ENCODE measurements at regions of chr22 and their contacts with region 1.

Region 1: GRCh38 chr22:42863349-42863961 is 6.4 kb upstream of the ARFGAP3 start:
- DNase-seq: peak; percentile 66 to 95
- H3K4me3 ChIP-seq: no peak overlapping the region
- H3K27ac ChIP-seq: peak overlapping the region; percentile 95
- H3K4me1 ChIP-seq: peaks cover 42% of the 10 kb centered on the region
- H3K27me3 ChIP-seq: no peaks in the 10 kb centered on the region
- CTCF ChIP-seq: no peak

Region 2: GRCh38 chr22:42621505-42622002 is 241.9 kb before region 1 on chr22:
- CTCF ChIA-PET with region 1: interaction called, 3 read pairs
- POLR2A ChIA-PET with region 1: interaction called, 10 read pairs
- intact Hi-C with region 1: loop called (anchors 1 kb)
- DNase-seq: peak in 1 of 2 experiments; percentile 70
- H3K4me3 ChIP-seq: no peak overlapping the region
- H3K27ac ChIP-seq: no peak overlapping the region
- H3K4me1 ChIP-seq: peaks cover 4% of the 10 kb centered on the region; the same call in 1 of the 2 replicates
- H3K27me3 ChIP-seq: no peaks in the 10 kb centered on the region
- CTCF ChIP-seq: peak; percentile 92

Region 3: DNA sequence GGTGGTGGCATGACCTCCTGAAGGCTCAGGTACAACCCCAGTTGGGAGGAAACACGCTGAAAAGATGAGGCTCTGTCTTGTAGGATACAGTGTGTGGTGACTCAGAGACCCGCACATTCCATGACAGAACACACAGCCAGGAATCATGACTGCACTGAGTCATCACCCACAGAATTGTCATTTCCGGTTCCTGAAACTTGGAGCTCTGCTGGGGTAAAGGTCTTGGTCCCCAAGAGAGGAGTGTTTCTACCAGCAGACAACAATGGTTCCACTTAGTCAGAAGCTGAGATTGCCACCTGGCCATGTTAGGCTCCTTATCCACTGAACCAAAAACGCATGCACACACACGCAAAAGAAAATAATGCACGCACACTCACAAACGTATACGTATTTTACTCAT is 182.8 kb before region 1 on chr22:
- CTCF ChIA-PET with region 1: interaction called, 13 read pairs
- POLR2A ChIA-PET with region 1: no interaction called
- intact Hi-C with region 1: no loop called
- DNase-seq: peak; percentile 38 to 92
- H3K4me3 ChIP-seq: no peak overlapping the region
- H3K27ac ChIP-seq: peak overlapping the region; percentile 54
- H3K4me1 ChIP-seq: peaks cover 19% of the 10 kb centered on the region
- H3K27me3 ChIP-seq: no peaks in the 10 kb centered on the region
- CTCF ChIP-seq: no peak

Region 4: GRCh38 chr22:42933481-42934091 is 70.1 kb after region 1 on chr22:
- CTCF ChIA-PET with region 1: no interaction called
- POLR2A ChIA-PET with region 1: no interaction called
- intact Hi-C with region 1: loop called (anchors 2 kb)
- DNase-seq: peak in 1 of 2 experiments; percentile 91
- H3K4me3 ChIP-seq: no peak overlapping the region
- H3K27ac ChIP-seq: peak overlapping the region; percentile 60
- H3K4me1 ChIP-seq: peaks cover 62% of the 10 kb centered on the region
- H3K27me3 ChIP-seq: no peaks in the 10 kb centered on the region
- CTCF ChIP-seq: no peak

Region 5: DNA sequence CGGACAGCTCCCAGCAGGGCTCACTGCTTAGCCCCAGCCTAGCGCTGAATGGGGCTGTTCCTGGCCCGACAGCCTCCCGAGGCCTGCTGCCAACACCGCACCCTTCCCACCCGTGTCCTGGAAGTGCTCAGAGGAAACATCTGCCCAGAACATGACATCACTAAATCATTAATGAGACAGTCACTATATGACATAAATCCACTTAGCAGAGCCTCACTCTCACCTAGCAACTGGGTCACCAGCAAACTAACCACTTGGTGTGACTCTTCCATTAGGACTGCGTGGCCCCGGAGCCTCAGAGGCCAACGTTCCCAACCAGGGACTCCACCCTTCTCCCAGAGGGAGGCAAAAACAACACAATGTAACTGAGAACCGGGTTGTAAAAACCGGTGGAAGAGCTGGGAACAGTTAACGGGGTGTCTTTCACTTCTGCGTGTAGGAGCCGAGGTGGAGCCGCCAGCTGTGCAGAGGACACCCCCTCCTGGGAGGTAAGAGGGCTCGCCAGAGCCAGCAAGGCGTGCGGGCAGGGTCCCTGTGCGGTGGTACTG is 172.9 kb after region 1 on chr22:
- CTCF ChIA-PET with region 1: interaction called, 7 read pairs
- POLR2A ChIA-PET with region 1: no interaction called
- intact Hi-C with region 1: loop called (anchors 1 kb)
- DNase-seq: no peak
- H3K4me3 ChIP-seq: no peak overlapping the region
- H3K27ac ChIP-seq: no peak overlapping the region
- H3K4me1 ChIP-seq: peaks cover 9% of the 10 kb centered on the region
- H3K27me3 ChIP-seq: no peaks in the 10 kb centered on the region
- CTCF ChIP-seq: no peak

Region 6: GRCh38 chr22:43126480-43127165 is 263.2 kb after region 1 on chr22:
- CTCF ChIA-PET with region 1: interaction called, 4 read pairs
- POLR2A ChIA-PET with region 1: interaction called, 3 read pairs
- intact Hi-C with region 1: loop called (anchors 1 kb)
- DNase-seq: peak; percentile 89 to 93
- H3K4me3 ChIP-seq: peak overlapping the region; percentile 10; the same call in 1 of the 2 replicates
- H3K27ac ChIP-seq: peak overlapping the region; percentile 92
- H3K4me1 ChIP-seq: peaks cover 46% of the 10 kb centered on the region
- H3K27me3 ChIP-seq: no peaks in the 10 kb centered on the region
- CTCF ChIP-seq: no peak